Activated naive CD4-positive, alpha-beta T cell treated with anti-CD3 and anti-CD28 coated beads for 36 hours (primary cell): ENCODE measurements at regions of chr11 and their contacts with region 1.

Region 1: GRCh38 chr11:119728651-119729580 is at the start of gene NECTIN1:
- DNase-seq: peak; percentile 88
- H3K4me3 Mint-ChIP-seq: peak within 1 kb of the TSS; percentile 81
- H3K27ac Mint-ChIP-seq: no peak within 1 kb of the TSS
- H3K4me1 Mint-ChIP-seq: peaks cover 14% of the 10 kb centered on the region
- H3K27me3 Mint-ChIP-seq: peaks cover 20% of the 10 kb centered on the region
- total RNA-seq, gene NECTIN1: 2.0 to 2.5 TPM

Region 2: GRCh38 chr11:119481021-119481666 is 247.8 kb before region 1 on chr11:
- CTCF ChIA-PET with region 1: no interaction called
- intact Hi-C with region 1: loop called (anchors 1 kb)
- DNase-seq: peak; percentile 87
- H3K4me3 Mint-ChIP-seq: no peak overlapping the region
- H3K27ac Mint-ChIP-seq: no peak overlapping the region
- H3K4me1 Mint-ChIP-seq: no peaks in the 10 kb centered on the region
- H3K27me3 Mint-ChIP-seq: peaks cover 6% of the 10 kb centered on the region

Region 3: DNA sequence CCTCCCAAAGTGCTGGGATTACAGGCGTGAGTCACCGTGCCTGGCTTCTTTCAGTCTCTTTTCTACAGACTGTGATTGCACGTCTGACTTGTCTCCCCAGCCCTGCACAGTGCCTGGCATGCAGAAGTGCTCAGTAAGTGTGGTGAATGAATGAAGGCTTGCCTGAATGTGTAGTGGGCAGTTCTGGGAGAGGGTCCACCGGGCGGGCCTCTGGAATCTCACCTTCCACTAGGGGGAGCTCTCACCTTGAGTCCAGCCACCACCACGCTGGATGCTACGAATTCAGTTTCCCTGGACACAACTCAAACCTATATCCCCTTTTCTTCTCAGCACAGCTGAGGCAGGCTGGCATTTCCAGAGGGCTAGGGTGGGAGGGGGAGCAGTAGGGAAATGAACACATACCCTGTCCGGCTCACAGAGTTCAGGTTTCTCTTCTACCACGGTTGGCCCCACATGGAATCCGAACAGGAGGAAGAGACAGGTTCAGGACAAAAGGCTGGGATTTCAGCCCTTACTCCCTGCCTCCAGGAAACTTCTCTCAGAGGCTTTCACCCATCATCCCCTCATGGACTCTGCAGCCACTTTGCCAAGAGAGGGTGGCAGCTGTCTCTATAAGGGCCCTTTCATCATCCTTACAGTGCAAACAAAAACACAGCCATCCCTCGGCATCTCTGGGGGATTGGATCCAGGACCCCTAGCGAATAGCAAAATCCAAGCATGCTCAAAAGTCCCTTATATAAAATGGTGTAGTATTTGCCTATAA is 86.8 kb before region 1 on chr11:
- CTCF ChIA-PET with region 1: interaction called, 14 read pairs
- intact Hi-C with region 1: no loop called
- DNase-seq: peak; percentile 22
- H3K4me3 Mint-ChIP-seq: no peak overlapping the region
- H3K27ac Mint-ChIP-seq: no peak overlapping the region
- H3K4me1 Mint-ChIP-seq: no peaks in the 10 kb centered on the region
- H3K27me3 Mint-ChIP-seq: no peaks in the 10 kb centered on the region

Region 4: GRCh38 chr11:119741369-119742262 is 12.7 kb after region 1 on chr11:
- CTCF ChIA-PET with region 1: interaction called, 20 read pairs
- intact Hi-C with region 1: no loop called
- DNase-seq: peak; percentile 64
- H3K4me3 Mint-ChIP-seq: peak overlapping the region; percentile 30
- H3K27ac Mint-ChIP-seq: no peak overlapping the region
- H3K4me1 Mint-ChIP-seq: peaks cover 11% of the 10 kb centered on the region
- H3K27me3 Mint-ChIP-seq: peaks cover 39% of the 10 kb centered on the region

Region 5: GRCh38 chr11:119810478-119811232 is 81.7 kb after region 1 on chr11:
- CTCF ChIA-PET with region 1: no interaction called
- intact Hi-C with region 1: no loop called
- DNase-seq: no peak
- H3K4me3 Mint-ChIP-seq: no peak overlapping the region
- H3K27ac Mint-ChIP-seq: no peak overlapping the region
- H3K4me1 Mint-ChIP-seq: no peaks in the 10 kb centered on the region
- H3K27me3 Mint-ChIP-seq: peaks cover 7% of the 10 kb centered on the region